Left colon (tissue), 2 donors: ENCODE measurements at regions of chr11 and their contacts with region 1.

Region 1: GRCh38 chr11:5808500-5809121 is at the start of gene OR52N2:
- DNase-seq: peak; percentile 42 to 75
- ATAC-seq: peak; percentile 89
- total RNA-seq, gene OR52N2: not detected

Region 2: DNA sequence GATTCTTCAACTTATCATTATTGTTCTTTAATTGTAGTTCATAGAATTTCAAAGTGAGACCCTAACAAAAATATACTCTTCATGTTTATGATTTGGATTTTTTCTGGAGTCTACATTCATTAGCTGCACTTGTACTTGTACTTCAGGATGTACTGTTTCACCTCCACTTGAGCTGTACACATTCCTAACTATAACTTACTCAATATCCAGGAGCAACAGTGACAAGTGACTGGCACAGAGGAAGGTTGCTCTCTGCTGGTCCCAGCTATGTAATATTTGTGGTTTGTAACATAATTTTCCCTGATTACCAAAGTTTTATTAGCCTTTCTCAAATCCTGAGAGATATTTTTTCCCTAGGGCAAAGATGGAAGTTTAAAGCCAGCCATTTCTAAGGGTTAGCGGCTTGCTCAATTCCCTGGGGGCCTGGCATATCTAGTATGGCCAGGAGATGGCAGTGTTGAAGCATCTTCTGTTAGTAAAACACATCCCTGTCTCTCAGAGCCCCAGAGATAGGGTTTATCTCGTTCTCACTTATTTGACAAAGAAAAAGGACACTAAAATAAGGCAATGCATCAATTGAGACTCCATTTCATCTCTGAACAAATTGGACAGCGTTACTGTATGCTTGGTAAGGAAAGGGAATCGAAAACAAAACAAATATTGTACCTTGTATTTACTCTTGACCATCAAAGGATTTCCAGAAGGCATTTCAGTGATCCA is 684.6 kb before region 1 on chr11:
- intact Hi-C with region 1: loop called in 1 of 2 experiments (anchors 10 kb)
- DNase-seq: peak in 1 of 2 donors; percentile 49
- ATAC-seq: peak; percentile 71

Region 3: GRCh38 chr11:5473921-5474320 is 334.7 kb before region 1 on chr11:
- intact Hi-C with region 1: loop called in 1 of 2 experiments (anchors 5 kb)
- DNase-seq: no peak
- ATAC-seq: no peak

Region 4: DNA sequence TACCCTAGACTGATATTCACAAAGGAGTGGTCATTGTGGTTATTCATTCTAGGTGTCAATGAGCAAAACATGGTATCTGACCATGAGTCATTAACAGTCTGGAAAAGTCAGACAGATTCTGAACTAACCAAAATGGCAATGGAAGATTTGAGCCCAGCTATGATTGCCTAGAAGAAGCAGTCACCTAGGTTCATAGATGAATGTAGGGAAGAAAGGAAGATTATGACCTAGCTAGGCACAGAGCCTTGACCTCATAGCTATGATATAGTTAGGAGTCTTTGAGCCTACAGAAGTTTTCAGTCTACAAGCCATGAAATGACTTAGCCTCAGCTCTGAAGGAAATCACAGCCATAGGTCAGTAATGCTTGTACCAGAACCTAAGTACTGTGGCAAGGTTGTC is 197.8 kb after region 1 on chr11:
- intact Hi-C with region 1: no loop called
- DNase-seq: no peak
- ATAC-seq: no peak

Region 5: GRCh38 chr11:6210274-6210955 is 401.8 kb after region 1 on chr11:
- intact Hi-C with region 1: no loop called
- DNase-seq: no peak
- ATAC-seq: peak; percentile 13